WTC11 (cell line): ENCODE measurements at regions of chr17 and their contacts with region 1.

Region 1: DNA sequence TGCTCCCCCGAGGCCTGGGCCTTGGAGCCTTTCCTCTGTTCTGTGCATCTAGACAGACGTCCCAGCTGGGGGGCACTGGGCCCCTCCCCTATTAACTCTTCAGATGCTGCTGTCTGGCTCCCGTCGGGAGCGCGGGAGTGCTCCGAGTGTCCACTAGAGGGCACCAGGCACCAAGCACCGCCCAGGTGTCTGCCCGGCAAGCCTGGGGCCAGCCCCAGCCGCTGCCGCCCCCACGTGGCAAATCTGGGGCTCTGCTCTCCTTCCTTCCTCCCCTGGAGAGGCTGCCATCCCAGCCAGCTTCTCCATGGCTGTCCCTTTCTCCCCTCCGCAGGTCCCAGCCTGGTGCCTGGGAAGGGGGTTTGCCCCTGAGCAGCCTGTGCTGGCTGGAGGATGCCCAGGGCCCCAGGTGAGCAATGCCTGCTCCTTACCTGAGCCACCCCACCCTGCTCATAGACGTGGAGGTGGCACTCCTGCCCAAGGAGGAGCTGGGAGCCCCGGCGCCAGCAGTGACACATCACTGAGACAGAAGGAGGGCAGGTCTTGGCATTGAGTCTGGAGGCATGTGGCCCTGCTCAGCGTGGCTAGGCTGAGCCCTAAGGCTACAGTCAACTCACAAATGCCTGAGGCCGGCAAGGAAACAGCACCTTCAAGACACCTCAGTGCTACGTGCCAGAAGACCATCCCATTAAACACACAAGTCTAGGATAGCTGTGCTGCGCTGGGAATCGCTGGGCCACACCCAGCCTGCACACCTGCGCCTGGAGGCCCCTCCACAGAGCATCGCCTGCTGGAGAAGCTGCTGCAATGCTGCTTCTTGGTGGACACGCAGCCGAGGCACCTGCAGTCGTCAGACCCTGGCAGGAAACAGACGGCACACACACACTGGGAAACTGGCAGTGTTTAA is 19.7 kb downstream of the TMEM235 start:
- DNase-seq: peak; percentile 96
- ATAC-seq: peak; percentile 77
- H3K4me3 Mint-ChIP-seq: no peak overlapping the region; the same call in 1 of the 2 replicates
- H3K27ac Mint-ChIP-seq: peak overlapping the region; percentile 76; the same call in 1 of the 2 replicates
- H3K4me1 Mint-ChIP-seq: peaks cover 28% of the 10 kb centered on the region
- H3K27me3 Mint-ChIP-seq: no peaks in the 10 kb centered on the region
- CTCF ChIP-seq: peak; percentile 97

Region 2: GRCh38 chr17:77796176-77796860 is 454.8 kb before region 1 on chr17:
- CTCF ChIA-PET with region 1: no interaction called
- POLR2A ChIA-PET with region 1: no interaction called
- DNase-seq: no peak
- ATAC-seq: no peak
- H3K4me3 Mint-ChIP-seq: no peak overlapping the region
- H3K27ac Mint-ChIP-seq: no peak overlapping the region
- H3K4me1 Mint-ChIP-seq: peaks cover 52% of the 10 kb centered on the region
- H3K27me3 Mint-ChIP-seq: peaks cover 50% of the 10 kb centered on the region
- CTCF ChIP-seq: no peak

Region 3: DNA sequence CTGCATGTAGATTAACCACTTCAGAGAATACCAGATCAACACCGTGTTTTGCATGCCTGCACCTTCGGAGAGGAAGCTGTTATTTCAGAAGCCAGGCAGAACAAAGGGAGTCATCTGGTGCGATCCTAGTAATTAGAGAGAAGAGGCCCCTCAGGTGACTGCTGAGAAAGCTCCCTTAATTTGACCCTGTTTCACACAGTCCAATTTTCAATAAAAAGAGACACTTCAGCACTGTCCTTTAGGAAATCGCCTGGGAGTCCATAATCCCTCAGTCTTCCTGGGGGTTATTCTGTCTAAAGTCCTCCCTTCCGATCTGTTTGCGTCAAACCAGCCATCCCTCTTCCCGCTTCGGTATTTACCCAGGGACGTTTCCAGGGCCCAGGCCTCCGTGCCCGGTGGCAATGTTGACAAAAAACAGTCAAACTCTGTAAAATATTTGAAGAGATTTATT is 316.0 kb before region 1 on chr17:
- CTCF ChIA-PET with region 1: no interaction called
- POLR2A ChIA-PET with region 1: no interaction called
- DNase-seq: no peak
- ATAC-seq: 0 out of 2 replicates have a peak, but pooled peaks have one; percentile 17
- H3K4me3 Mint-ChIP-seq: peak overlapping the region; percentile 35
- H3K27ac Mint-ChIP-seq: peak overlapping the region; percentile 93
- H3K4me1 Mint-ChIP-seq: peaks cover 53% of the 10 kb centered on the region
- H3K27me3 Mint-ChIP-seq: peaks cover 3% of the 10 kb centered on the region; the same call in 1 of the 2 replicates
- CTCF ChIP-seq: no peak

Region 4: DNA sequence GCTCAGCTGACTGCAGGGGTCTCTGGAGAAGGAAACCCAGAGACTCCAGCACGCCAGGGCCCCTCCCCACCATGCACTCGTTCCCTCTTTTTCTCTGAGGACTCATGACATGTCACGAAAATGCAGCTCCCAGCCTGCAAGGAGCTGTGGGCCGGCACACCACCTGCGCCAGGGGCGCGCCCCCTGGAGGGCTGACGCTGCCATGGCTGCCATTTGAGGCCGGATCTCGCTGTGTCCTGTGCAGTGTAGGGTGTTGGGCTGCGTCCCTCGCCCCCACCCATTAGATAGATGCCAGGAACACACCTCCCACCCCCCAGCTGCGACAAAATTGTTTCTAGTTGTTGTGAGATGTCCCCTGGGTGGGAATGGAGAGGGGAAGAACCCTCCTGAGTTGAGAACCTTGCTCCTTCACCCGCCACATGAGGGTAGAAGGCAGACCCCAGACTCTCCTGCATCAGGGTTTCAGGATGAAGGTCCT is 74.6 kb before region 1 on chr17:
- CTCF ChIA-PET with region 1: interaction called, 23 read pairs
- POLR2A ChIA-PET with region 1: no interaction called
- DNase-seq: peak; percentile 82
- ATAC-seq: peak; percentile 65
- H3K4me3 Mint-ChIP-seq: no peak overlapping the region
- H3K27ac Mint-ChIP-seq: no peak overlapping the region
- H3K4me1 Mint-ChIP-seq: peaks cover 42% of the 10 kb centered on the region
- H3K27me3 Mint-ChIP-seq: no peaks in the 10 kb centered on the region
- CTCF ChIP-seq: peak; percentile 84

Region 5: DNA sequence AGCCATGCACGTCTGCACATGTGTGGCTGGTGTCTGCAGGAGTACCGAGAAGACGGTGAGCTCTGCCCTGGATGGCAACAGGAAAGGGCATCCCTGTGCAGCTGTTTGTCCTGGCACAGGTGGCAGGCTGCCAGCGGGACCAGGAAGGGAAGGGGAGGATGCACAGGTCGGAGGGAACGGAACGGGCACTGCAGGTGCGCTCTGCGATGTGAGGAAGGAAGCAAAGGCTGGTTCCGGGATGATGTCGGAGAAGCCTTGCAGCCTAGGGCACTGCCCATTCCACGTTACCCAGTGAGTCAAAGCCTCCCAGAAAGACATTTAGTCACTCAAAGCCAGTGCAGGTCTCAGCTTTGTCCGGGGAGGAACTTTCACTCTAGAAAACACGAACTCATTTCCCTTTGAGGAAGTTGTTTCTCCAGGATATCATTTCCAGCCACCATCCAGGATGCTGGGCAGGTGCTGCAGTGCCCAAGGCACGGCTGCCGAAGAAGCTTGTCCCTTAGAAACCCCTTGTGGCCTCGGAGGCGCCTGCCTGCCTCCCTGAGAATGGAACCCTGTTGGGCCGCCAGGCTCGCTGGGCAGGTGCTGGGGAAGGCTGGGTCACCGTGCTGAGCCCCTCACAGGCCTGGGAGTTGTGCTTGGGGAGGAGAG is 24.3 kb before region 1 on chr17:
- CTCF ChIA-PET with region 1: interaction called, 22 read pairs
- POLR2A ChIA-PET with region 1: interaction called, 4 read pairs
- DNase-seq: no peak
- ATAC-seq: no peak
- H3K4me3 Mint-ChIP-seq: no peak overlapping the region
- H3K27ac Mint-ChIP-seq: no peak overlapping the region; the same call in 1 of the 2 replicates
- H3K4me1 Mint-ChIP-seq: peaks cover 4% of the 10 kb centered on the region; the same call in 1 of the 2 replicates
- H3K27me3 Mint-ChIP-seq: peaks cover 18% of the 10 kb centered on the region
- CTCF ChIP-seq: no peak

Region 6: GRCh38 chr17:78272181-78272913 is 21.2 kb after region 1 on chr17:
- CTCF ChIA-PET with region 1: interaction called, 52 read pairs
- POLR2A ChIA-PET with region 1: interaction called, 5 read pairs
- DNase-seq: peak; percentile 67
- ATAC-seq: peak; percentile 62
- H3K4me3 Mint-ChIP-seq: no peak overlapping the region
- H3K27ac Mint-ChIP-seq: peak overlapping the region; percentile 53
- H3K4me1 Mint-ChIP-seq: peaks cover 48% of the 10 kb centered on the region
- H3K27me3 Mint-ChIP-seq: peaks cover 2% of the 10 kb centered on the region; the same call in 1 of the 2 replicates
- CTCF ChIP-seq: no peak

Region 7: DNA sequence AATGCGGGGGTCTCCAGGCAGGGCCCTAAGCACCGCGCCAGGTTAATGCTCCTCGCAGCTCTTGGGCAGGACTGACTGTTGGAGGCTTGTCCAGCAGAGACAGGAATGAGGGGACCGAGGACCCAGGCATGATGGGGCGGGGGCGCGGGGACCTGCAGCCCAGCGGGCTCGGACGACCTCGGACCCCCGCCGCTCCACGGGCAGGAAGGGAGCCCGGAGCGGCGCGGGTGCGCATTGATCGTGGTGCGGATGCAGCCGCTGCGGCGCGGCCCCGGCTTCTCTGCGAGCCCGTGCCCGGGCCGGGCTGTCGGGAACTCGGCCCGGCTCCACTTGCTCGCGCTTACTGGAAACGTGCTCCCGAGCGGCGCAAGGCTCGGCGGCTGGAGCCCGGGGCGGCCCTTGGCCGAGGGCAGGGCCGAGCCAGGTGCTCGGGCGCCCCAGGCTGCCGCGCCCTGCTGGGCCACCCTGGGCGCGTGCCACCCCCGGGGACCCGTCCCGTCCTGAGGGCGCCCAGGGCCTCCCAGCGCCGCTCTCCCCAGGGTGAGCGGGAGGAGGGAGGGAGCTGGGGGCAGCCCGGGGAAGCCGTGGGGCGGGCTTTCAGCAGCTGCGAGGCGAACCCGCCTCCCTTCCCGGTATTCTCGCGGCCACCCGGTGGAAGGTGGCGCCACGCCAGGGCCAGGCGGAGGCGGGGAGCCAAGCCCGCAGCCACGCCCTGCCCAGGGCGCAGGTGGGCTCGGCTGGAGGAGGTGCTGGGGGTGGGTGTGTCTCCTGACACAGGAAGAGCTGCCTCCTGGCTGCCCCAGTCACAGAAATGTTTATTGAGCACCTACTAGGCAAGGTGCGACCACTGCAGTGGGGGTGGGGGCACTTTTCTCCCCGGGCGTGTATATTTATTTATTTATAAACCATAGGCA is 62.8 kb after region 1 on chr17:
- CTCF ChIA-PET with region 1: interaction called, 19 read pairs
- POLR2A ChIA-PET with region 1: interaction called, 3 read pairs
- DNase-seq: peak; percentile 84
- ATAC-seq: peak; percentile 77
- H3K4me3 Mint-ChIP-seq: peak overlapping the region; percentile 71
- H3K27ac Mint-ChIP-seq: peak overlapping the region; percentile 58; the same call in 1 of the 2 replicates
- H3K4me1 Mint-ChIP-seq: peaks cover 46% of the 10 kb centered on the region
- H3K27me3 Mint-ChIP-seq: peaks cover 6% of the 10 kb centered on the region
- CTCF ChIP-seq: no peak

Region 8: GRCh38 chr17:78421484-78422266 is 170.5 kb after region 1 on chr17:
- CTCF ChIA-PET with region 1: interaction called, 33 read pairs
- POLR2A ChIA-PET with region 1: no interaction called
- DNase-seq: peak; percentile 91
- ATAC-seq: peak; percentile 84
- H3K4me3 Mint-ChIP-seq: no peak overlapping the region
- H3K27ac Mint-ChIP-seq: peak overlapping the region; percentile 91
- H3K4me1 Mint-ChIP-seq: peaks cover 17% of the 10 kb centered on the region
- H3K27me3 Mint-ChIP-seq: no peaks in the 10 kb centered on the region
- CTCF ChIP-seq: peak; percentile 92